B cell (primary cell): ENCODE measurements at regions of chr7 and their contacts with region 1.

Region 1: DNA sequence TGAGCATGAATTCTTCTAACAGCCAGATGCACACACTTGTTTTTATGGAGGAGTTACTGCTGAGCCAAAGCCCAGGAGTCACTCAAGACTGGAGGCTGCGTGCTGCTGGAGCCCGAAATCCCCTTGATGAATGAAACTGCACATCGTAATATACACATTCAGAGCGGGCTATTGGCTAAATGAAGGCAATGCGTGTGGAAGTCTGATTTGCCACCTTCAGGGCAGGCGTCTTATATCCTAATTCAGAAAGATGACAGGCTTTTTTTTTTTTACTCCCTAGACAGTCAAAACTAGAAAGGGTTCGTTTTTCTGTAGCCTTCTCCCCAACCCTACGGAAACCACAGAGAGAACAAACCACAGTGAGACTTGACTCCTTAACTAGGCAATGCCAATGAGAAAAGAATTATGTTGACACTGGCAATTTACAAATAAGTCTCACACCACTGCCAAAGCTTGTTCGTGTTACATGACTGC is 227.2 kb upstream of the KLF14 start:
- DNase-seq: peak; percentile 78
- ATAC-seq: peak; percentile 34
- H3K4me3 ChIP-seq: peak overlapping the region in 4 of 5 experiments; percentile 24 to 61 (median 38)
- H3K4me3 Mint-ChIP-seq: peak overlapping the region; percentile 90
- H3K27ac ChIP-seq: peak overlapping the region; percentile 66 to 81
- H3K27ac Mint-ChIP-seq: peak overlapping the region; percentile 94
- H3K4me1 ChIP-seq: peaks cover 62% of the 10 kb centered on the region in 2 donors
- H3K4me1 Mint-ChIP-seq: peaks cover 68% of the 10 kb centered on the region
- H3K27me3 ChIP-seq: no peaks in the 10 kb centered on the region
- H3K27me3 Mint-ChIP-seq: no peaks in the 10 kb centered on the region
- CTCF ChIP-seq: no peak

Region 2: DNA sequence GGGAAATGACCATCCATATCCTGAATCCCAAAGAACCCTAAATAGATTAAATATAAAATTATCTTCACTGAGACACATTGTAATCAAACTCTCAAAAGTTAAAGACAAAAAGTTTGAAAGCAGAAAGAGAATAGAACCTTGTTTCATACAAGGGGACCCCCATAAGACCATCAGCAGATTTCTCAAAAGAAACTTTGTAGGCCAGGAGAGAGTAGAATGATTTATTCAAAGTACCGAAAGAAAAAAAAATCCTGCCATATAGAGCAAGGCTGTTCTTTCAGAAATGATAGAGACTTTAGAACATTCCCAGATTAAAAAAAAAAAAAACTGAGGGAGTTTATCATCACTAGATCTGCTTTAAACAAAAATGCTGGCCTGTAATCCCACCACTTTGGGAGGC is 192.3 kb before region 1 on chr7:
- CTCF ChIA-PET with region 1: no interaction called
- POLR2A ChIA-PET with region 1: no interaction called
- intact Hi-C with region 1: no loop called
- DNase-seq: no peak
- ATAC-seq: no peak
- H3K4me3 ChIP-seq: no peak overlapping the region
- H3K4me3 Mint-ChIP-seq: no peak overlapping the region
- H3K27ac ChIP-seq: no peak overlapping the region
- H3K27ac Mint-ChIP-seq: no peak overlapping the region
- H3K4me1 ChIP-seq: no peaks in the 10 kb centered on the region
- H3K4me1 Mint-ChIP-seq: no peaks in the 10 kb centered on the region
- H3K27me3 ChIP-seq: peaks cover 0 to 4% (median 0%) of the 10 kb centered on the region in 4 experiments
- H3K27me3 Mint-ChIP-seq: peaks cover 29% of the 10 kb centered on the region
- CTCF ChIP-seq: no peak

Region 3: DNA sequence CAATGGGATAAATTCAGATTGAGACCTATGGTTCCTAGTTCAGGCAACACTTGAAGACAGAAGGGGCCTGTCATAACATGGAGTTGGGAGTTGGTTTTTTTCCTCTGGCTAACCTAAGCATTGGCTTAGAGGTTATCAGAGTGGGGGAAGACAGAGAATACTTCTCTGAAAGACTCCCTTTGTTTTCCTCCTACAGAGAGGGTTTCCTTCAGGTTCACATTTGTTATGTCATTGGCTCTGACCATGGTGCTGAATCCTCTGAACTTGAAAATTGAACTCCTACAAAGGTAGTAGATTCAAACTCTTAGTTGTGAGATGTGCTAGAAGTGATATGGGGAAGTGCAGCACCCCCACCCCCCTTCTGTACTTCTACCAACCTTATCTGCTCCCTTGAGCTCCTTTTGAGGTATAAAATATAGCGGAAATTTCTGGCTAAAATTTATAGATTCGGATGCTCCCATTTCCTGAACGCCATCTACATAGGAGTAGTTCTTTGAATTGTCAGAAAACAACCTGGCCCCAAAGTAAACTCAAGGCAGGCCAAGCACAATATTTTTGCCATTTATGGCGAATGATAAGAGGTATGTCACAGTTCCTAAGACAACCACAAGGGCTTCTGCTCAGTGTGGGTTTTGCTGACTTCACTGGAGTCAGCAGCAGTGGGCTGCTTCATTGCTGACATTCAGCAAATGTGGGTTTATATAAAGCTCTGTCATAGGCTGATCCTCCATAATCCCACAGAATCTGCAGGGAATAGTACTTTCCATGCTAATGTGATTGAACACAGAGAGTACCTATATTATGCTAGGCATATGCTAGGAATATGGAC is 95.5 kb before region 1 on chr7:
- CTCF ChIA-PET with region 1: no interaction called
- POLR2A ChIA-PET with region 1: no interaction called
- intact Hi-C with region 1: no loop called
- DNase-seq: no peak
- ATAC-seq: no peak
- H3K4me3 ChIP-seq: no peak overlapping the region
- H3K4me3 Mint-ChIP-seq: no peak overlapping the region
- H3K27ac ChIP-seq: no peak overlapping the region
- H3K27ac Mint-ChIP-seq: no peak overlapping the region
- H3K4me1 ChIP-seq: no peaks in the 10 kb centered on the region
- H3K4me1 Mint-ChIP-seq: peaks cover 9% of the 10 kb centered on the region
- H3K27me3 ChIP-seq: no peaks in the 10 kb centered on the region
- H3K27me3 Mint-ChIP-seq: no peaks in the 10 kb centered on the region
- CTCF ChIP-seq: no peak

Region 4: DNA sequence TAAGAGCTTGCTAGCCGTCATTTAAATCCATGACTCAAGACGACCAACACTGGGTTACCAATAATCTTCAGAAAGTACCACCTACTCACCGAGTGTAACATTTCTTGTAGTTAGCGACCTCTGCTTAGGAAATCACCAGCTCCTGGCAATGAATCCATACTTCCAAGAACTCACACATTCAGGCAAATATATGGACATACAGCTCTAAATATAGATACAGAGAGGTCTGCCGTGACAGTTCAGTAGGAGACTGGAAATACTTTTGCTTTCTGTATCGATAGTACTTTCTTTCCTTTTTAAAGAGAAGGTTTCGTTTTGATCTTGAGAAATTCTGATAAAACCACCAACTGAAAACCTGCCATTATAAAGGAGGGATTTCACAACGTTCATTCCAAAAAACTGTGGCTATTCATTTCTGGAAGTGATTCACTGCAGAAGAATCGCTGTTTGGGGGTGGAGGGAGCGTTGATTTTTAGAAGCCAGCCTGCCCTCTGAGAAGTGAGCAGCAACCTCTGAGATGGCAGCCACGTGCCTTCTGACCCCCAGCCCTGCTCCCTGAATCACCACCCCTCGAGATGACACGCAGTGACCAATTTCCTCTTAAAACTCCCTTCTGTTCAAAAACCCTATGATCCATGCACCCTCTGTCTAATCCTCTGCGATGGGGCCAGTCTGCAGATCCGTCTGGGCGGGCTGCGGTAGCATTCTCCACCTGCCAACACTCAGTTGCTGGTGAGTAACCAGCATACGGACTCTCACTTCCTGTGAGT is 48.1 kb before region 1 on chr7:
- CTCF ChIA-PET with region 1: interaction called, 3 read pairs
- POLR2A ChIA-PET with region 1: no interaction called
- intact Hi-C with region 1: loop called (anchors 1 kb)
- DNase-seq: peak; percentile 92
- ATAC-seq: peak; percentile 91
- H3K4me3 ChIP-seq: peak overlapping the region; percentile 54 to 98 (median 73)
- H3K4me3 Mint-ChIP-seq: peak overlapping the region; percentile 90
- H3K27ac ChIP-seq: peak overlapping the region; percentile 82 to 98
- H3K27ac Mint-ChIP-seq: peak overlapping the region; percentile 84
- H3K4me1 ChIP-seq: peaks cover 28 to 37% of the 10 kb centered on the region in 2 donors
- H3K4me1 Mint-ChIP-seq: peaks cover 78% of the 10 kb centered on the region
- H3K27me3 ChIP-seq: no peaks in the 10 kb centered on the region
- H3K27me3 Mint-ChIP-seq: no peaks in the 10 kb centered on the region
- CTCF ChIP-seq: no peak

Region 5: DNA sequence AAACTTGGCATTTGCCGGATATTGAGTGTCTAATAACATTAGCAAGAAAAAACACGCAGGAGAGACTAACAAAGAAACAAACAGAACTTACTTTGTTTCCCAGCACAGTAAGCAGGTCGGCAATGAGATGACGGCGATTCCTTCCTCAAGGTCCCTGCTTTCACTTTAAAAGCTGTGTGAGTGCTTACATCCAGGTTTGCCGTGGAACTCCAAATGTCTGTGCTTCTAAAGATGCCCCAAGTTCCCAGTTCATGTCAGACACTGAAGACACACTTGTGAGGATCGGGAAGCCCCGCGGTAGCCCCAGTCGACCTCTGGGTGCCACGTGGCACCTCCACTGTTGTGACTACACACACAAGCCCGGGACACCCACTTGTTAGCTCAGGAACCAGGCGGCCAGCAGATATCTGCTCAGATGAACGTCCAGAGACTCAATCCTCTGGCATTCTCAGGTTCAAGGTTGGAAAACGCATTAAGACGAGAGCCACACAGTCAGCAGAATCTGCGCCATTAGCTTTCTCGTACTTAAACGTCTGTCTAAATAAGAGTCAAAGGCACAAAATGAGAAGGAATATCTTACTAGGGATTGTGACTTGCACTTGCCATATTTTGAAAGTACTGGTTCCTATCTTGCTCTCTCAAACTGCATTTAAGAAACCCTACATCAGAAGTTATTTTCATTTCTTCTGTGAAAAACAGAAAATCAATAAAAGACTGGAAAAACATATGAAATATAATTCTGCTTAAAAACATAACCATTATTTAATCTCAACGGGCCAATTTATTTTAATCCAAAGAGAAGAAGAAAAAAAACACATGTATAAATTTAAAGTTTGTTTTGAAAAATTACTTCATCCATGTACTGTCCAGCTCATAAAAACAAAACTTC is 19.6 kb before region 1 on chr7:
- CTCF ChIA-PET with region 1: interaction called, 7 read pairs
- POLR2A ChIA-PET with region 1: interaction called, 6 read pairs
- intact Hi-C with region 1: loop called (anchors 1 kb)
- DNase-seq: peak; percentile 55
- ATAC-seq: no peak
- H3K4me3 ChIP-seq: peak overlapping the region; percentile 9 to 42 (median 28)
- H3K4me3 Mint-ChIP-seq: peak overlapping the region; percentile 76
- H3K27ac ChIP-seq: peak overlapping the region; percentile 38 to 92
- H3K27ac Mint-ChIP-seq: peak overlapping the region; percentile 65
- H3K4me1 ChIP-seq: peaks cover 34 to 38% of the 10 kb centered on the region in 2 donors
- H3K4me1 Mint-ChIP-seq: peaks cover 83% of the 10 kb centered on the region
- H3K27me3 ChIP-seq: no peaks in the 10 kb centered on the region
- H3K27me3 Mint-ChIP-seq: no peaks in the 10 kb centered on the region
- CTCF ChIP-seq: no peak

Region 6: GRCh38 chr7:131007394-131008330 is 46.5 kb after region 1 on chr7:
- CTCF ChIA-PET with region 1: interaction called, 5 read pairs
- POLR2A ChIA-PET with region 1: no interaction called
- intact Hi-C with region 1: loop called (anchors 5 kb)
- DNase-seq: peak; percentile 82
- ATAC-seq: peak; percentile 70
- H3K4me3 ChIP-seq: no peak overlapping the region
- H3K4me3 Mint-ChIP-seq: peak overlapping the region; percentile 82
- H3K27ac ChIP-seq: peak overlapping the region; percentile 56 to 86
- H3K27ac Mint-ChIP-seq: peak overlapping the region; percentile 89
- H3K4me1 ChIP-seq: peaks cover 59 to 62% of the 10 kb centered on the region in 2 donors
- H3K4me1 Mint-ChIP-seq: peaks cover 77% of the 10 kb centered on the region
- H3K27me3 ChIP-seq: no peaks in the 10 kb centered on the region
- H3K27me3 Mint-ChIP-seq: no peaks in the 10 kb centered on the region
- CTCF ChIP-seq: peak; percentile 72

Region 7: DNA sequence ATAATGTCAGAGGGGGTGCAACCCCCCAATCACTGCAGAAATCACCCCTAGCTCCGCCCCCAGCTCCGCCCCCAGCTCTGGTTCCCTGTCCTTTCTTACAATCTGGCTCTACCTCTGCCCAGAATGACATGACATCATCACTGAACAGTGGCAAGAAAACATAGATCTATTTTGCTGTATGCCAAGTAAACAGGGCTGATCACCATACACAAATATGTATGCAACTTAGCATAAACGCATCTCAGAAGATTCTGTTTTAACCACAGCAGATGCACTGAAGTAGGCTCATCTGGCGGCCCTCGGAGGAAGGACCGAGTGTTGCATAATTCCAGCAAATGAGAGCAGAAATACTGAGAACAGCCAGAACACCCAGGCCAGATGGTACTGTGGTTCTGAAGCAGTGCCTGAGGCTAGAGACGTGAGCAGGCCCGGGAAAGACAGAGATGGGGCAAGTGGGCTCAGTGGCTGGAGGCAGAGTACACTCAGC is 66.2 kb after region 1 on chr7:
- CTCF ChIA-PET with region 1: interaction called, 4 read pairs
- POLR2A ChIA-PET with region 1: no interaction called
- intact Hi-C with region 1: loop called (anchors 5 kb)
- DNase-seq: peak; percentile 60
- ATAC-seq: peak; percentile 14
- H3K4me3 ChIP-seq: no peak overlapping the region
- H3K4me3 Mint-ChIP-seq: peak overlapping the region; percentile 38
- H3K27ac ChIP-seq: peak overlapping the region; percentile 68 to 93
- H3K27ac Mint-ChIP-seq: peak overlapping the region; percentile 83
- H3K4me1 ChIP-seq: peaks cover 75 to 87% of the 10 kb centered on the region in 2 donors
- H3K4me1 Mint-ChIP-seq: peaks cover 85% of the 10 kb centered on the region
- H3K27me3 ChIP-seq: no peaks in the 10 kb centered on the region
- H3K27me3 Mint-ChIP-seq: no peaks in the 10 kb centered on the region
- CTCF ChIP-seq: no peak

Region 8: GRCh38 chr7:131327626-131328376 is 366.6 kb after region 1 on chr7 and contains the start of gene MKLN1:
- CTCF ChIA-PET with region 1: no interaction called
- POLR2A ChIA-PET with region 1: no interaction called
- intact Hi-C with region 1: loop called (anchors 5 kb)
- DNase-seq: peak; percentile 93
- ATAC-seq: peak; percentile 97
- H3K4me3 ChIP-seq: peak within 1 kb of the TSS; percentile 93 to 99 (median 96)
- H3K4me3 Mint-ChIP-seq: peak within 1 kb of the TSS; percentile 85
- H3K27ac ChIP-seq: peak within 1 kb of the TSS; percentile 88 to 91
- H3K27ac Mint-ChIP-seq: peak within 1 kb of the TSS; percentile 95
- H3K4me1 ChIP-seq: peaks cover 26 to 29% of the 10 kb centered on the region in 2 donors
- H3K4me1 Mint-ChIP-seq: peaks cover 62% of the 10 kb centered on the region
- H3K27me3 ChIP-seq: no peaks in the 10 kb centered on the region
- H3K27me3 Mint-ChIP-seq: no peaks in the 10 kb centered on the region
- CTCF ChIP-seq: no peak
- total RNA-seq, gene MKLN1: 68.4 and 73.6 TPM in 2 replicates